Calu3 (cell line): ENCODE measurements at regions of chr3 and their contacts with region 1.

Region 1: DNA sequence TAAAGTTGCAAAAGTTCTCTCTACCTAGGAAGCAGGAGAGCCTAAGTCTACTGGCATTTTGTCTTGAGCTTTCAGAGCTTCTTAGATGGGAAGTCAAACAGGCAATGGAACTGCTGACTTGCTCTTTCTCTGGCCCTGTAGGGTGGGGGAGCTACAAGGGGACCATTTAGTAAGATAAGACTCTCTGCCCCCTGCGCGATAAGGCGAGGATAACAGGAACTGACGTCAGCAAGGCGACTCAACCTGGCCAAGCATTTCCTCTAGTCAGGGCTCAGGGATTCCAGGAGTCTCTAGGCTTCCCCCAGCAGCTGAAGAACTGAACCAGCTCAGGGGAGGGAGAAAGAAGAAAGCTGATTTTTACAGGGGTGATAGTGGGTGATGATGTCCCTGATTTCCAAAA is 5.8 kb downstream of the RARB start:
- DNase-seq: peak; percentile 56
- H3K4me3 Mint-ChIP-seq: peak overlapping the region; percentile 53
- H3K27ac Mint-ChIP-seq: peak overlapping the region; percentile 88
- H3K4me1 Mint-ChIP-seq: peaks cover 49% of the 10 kb centered on the region
- H3K27me3 Mint-ChIP-seq: no peaks in the 10 kb centered on the region
- CTCF ChIP-seq: no peak

Region 2: DNA sequence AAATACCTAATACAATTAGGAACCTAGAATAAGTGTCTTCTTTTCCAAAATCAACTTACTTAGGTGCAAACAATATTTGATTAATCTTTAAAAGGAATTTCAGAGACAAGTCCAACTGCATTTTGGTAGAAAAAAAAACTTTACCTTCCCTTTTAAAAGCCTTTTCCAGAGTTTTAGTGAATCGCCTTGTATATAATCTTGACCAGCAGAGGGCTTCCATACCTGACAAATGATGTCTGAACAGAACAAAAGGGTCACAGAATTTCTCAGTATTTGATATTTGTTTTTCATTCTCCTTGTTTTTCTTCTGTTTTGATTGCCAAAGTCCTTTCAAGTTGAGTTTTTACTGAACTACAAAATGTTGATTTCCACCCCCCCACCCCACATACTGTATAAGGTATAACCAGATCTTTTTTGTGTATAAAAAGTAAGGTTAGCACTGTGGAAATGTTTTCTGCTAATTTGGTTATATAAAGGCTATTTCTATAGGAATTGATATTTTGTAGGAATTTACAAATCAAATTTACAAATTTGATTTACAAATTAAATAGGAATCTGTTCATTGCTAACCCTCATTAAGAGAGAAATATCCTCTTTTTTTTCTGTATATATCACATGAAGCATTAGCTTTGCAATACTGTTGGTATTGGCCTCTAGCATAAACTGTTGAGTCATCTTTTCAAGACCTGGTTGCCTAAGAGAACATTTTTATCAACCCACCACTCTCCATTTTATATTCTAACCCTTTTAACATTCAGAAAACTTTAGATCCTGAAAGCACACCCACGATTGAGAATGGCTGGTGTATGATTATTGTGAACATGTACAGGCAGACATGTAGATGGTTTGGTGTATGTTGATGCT is 469.9 kb before region 1 on chr3:
- CTCF ChIA-PET with region 1: no interaction called
- intact Hi-C with region 1: loop called (anchors 5 kb)
- DNase-seq: peak; percentile 7
- H3K4me3 Mint-ChIP-seq: no peak overlapping the region
- H3K27ac Mint-ChIP-seq: no peak overlapping the region
- H3K4me1 Mint-ChIP-seq: peaks cover 13% of the 10 kb centered on the region
- H3K27me3 Mint-ChIP-seq: no peaks in the 10 kb centered on the region
- CTCF ChIP-seq: no peak